GM18951 (cell line): ENCODE measurements at regions of chr13 and their contacts with region 1.

Region 1: GRCh38 chr13:77789376-77789775 is 91.9 kb downstream of the SLAIN1 start:
- POLR2A ChIP-seq: no peak

Region 2: DNA sequence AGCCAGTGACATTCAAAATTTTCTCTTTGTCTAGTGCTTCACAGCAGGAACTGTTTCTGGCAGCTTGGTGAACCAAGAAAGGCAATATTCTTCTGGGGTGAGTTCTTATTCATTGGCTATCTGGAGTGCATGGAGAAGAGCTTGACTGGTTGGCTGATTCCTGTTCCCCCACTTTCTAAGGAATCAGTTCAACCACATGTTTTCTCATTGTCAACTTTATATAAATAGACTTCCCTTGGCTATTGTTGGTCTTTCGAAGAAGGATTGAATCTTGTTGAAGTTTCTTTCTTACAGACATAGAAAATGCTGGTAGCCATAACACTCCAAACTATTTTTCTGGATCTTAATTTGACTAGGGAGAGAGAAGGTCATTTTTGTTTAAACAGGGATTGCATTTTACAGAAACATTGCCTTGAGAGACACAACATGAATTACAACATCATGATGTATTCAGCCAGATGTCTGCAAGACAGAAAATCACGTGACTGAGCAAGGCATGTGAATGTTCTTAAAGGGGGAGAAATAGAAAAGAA is 44.0 kb after region 1 on chr13:
- in situ Hi-C with region 1: no loop called
- POLR2A ChIP-seq: no peak

Region 3: DNA sequence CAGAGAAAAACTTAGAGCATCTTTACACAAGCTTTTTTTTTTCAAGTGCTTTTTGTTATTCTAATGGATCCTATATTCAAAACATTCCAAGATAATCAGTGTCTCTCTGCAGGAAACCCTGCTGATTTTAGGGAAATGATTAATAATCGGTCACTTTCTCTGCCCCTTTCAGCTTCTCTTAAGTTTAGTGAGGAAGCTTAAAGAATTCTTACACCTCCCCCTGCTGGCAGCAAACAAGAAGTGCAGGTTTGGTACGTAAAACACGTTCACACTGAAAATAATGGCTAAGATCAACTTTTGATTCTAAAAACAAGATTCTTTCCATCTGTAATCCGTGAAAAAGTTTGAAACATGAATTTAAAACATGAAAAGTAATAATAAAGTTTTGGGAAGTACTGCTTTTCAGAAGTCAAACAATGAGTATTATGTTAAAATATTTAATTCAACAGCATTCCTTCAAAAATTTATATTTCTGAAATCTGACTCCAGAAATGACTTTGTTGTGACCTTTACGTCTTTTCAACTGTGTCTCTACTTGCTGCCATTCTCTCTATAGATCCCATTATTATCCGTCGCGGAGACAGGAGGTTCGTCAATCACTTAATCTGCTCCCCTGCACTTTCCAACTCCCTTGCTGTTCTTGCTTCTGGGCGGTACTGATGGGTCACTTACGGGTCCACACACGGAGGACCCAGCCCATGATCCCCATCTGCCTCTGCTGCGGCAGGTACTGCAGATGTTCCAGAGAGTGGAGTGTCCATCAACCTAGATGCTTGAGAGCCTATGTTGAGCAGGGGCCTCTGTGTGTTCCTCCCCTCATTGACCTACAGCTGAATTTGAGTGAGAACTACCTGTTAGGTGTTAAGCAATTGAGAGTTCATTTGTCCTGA is 332.3 kb after region 1 on chr13:
- in situ Hi-C with region 1: loop called (anchors 5 kb)
- POLR2A ChIP-seq: no peak

Region 4: GRCh38 chr13:78334059-78334458 is 544.7 kb after region 1 on chr13:
- in situ Hi-C with region 1: no loop called
- POLR2A ChIP-seq: no peak

Region 5: GRCh38 chr13:78420814-78421213 is 631.4 kb after region 1 on chr13:
- in situ Hi-C with region 1: no loop called
- POLR2A ChIP-seq: no peak